ENCODE measurements at regions of chrX and their contacts with region 1.

Region 1: DNA sequence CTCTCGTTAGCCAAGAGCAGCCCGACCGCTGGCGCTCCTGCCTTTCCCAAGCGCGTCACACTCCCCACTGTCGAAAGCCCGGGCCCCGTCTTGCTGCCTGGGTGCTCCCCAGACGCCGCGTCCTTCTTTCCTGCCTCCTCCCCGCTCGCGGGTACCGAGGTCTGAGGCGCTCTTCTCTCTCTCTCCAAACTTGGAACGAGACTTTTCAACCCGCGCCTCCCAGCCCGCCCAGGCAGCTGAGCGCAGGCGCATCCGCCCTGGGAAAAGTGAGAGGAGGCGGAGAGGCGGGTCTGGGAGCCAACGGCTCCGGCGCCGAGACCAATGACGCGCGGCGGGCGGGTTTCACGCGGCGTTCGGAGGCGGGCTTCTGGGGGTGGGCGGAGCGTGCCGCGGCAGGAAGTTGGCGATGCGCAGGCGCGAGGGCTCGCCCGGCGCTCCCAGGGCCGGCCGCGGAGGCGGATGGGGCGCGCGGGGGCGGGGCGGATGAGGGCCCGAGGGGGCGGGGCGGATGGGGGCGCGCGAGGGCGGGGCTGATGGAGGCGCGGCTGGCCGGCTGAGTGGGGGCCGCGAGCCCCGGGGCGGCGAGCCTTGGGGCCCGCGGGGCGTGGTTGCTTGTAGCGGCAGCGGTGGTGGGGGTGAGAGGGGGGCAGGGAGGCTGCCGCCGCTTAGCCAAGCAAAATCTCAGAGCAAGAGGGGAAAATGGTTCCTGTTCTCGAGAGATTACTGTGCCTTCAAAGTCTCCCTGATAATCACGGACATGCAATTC is at the start of gene RBBP7:
- DNase-seq: peak; percentile 92
- ATAC-seq: peak; percentile 80
- H3K4me3 ChIP-seq: peak within 1 kb of the TSS; percentile 41 to 94 (median 79)
- H3K4me3 Mint-ChIP-seq: peak within 1 kb of the TSS; percentile 93
- H3K27ac ChIP-seq: peak within 1 kb of the TSS; percentile 96 to 99
- H3K27ac Mint-ChIP-seq: peak within 1 kb of the TSS; percentile 98
- H3K4me1 ChIP-seq: peaks cover 26 to 33% of the 10 kb centered on the region in 2 donors
- H3K4me1 Mint-ChIP-seq: peaks cover 43% of the 10 kb centered on the region
- H3K27me3 ChIP-seq: peaks cover 0 to 10% (median 0%) of the 10 kb centered on the region in 4 experiments
- H3K27me3 Mint-ChIP-seq: no peaks in the 10 kb centered on the region
- CTCF ChIP-seq: no peak
- total RNA-seq, gene RBBP7: 106 and 110 TPM in 2 replicates

Region 2: GRCh38 chrX:16946361-16946964 is 76.2 kb after region 1 on chrX and contains the start of gene REPS2:
- CTCF ChIA-PET with region 1: no interaction called
- POLR2A ChIA-PET with region 1: no interaction called
- intact Hi-C with region 1: loop called (anchors 1 kb)
- DNase-seq: peak; percentile 88
- ATAC-seq: peak; percentile 94
- H3K4me3 ChIP-seq: peak within 1 kb of the TSS in 4 of 5 experiments; percentile 51 to 64 (median 62)
- H3K4me3 Mint-ChIP-seq: peak within 1 kb of the TSS; percentile 87
- H3K27ac ChIP-seq: peak within 1 kb of the TSS in 1 of 2 donors; percentile 23
- H3K27ac Mint-ChIP-seq: peak within 1 kb of the TSS; percentile 50
- H3K4me1 ChIP-seq: peaks cover 8 to 17% of the 10 kb centered on the region in 2 donors
- H3K4me1 Mint-ChIP-seq: peaks cover 9% of the 10 kb centered on the region
- H3K27me3 ChIP-seq: no peaks in the 10 kb centered on the region
- H3K27me3 Mint-ChIP-seq: no peaks in the 10 kb centered on the region
- CTCF ChIP-seq: no peak
- total RNA-seq, gene REPS2: 4.9 and 9.4 TPM in 2 replicates

Measured in B cell (primary cell).